ENCODE measurements at regions of chr4 and their contacts with region 1.

Region 1: DNA sequence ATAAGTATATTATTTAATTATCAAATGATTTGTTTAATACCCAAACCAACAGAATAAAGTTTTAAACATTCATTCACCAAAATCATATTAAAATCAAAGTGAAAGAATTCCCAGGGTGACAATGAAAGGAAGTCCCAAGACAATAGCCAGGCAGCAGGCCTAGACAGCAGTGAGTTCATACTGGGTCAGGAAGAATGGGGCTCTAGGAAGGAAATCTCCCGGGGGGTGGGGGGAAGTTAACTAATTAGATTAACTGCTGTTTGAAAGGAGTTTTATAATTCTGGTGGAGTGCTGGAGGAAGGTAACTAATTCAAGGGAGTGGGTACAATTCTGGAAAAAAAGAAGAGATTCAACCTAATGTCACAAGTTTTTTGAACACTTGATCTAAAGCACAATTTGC is 104.1 kb downstream of the ZAR1 start:
- DNase-seq: no peak
- ATAC-seq: no peak

Region 2: GRCh38 chr4:48687313-48688051 is 93.3 kb after region 1 on chr4:
- intact Hi-C with region 1: loop called (anchors 5 kb)
- DNase-seq: no peak
- ATAC-seq: no peak

Measured in Right ventricle myocardium inferior (tissue), 1 donor.